Posterior vena cava (tissue), 2 donors: ENCODE measurements at regions of chr16 and their contacts with region 1.

Region 1: GRCh38 chr16:11004957-11005610 is 60.7 kb downstream of the CLEC16A start:
- DNase-seq: no peak

Region 2: DNA sequence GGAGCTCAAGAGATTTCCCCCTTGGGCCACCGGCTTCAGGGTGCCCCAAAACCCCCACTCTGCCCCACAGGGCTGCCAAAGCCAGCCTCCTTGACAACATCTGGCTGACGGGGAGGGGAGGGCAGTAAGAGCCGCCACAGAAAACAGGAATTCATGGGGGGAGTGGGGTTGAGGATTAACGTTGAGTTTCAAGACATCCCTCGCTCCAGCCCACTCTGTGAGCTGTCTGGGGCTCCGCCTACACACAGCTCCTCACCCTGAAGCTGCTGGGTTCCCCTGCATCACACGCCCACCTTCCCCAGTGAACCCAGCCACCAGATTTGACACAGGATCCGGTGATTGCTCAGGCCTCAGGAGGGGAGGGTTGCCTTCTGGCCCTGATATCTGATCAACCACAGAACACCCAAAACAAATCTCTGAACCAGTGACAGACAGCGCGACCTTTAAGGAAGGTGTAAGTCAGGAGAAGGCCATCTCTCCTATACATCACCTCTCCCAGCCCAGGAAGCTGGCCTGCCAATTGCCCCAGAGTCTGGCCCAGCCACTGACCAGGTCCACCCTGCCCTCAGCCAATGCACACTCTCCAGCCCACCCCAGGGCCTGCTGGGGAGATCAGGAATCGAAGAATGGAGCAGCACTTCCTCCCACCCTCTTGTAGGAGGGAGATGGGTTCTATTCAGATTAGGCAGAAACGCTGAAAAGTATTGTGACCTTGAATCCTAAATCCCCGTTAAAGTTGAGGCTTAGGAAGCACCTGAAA is 71.4 kb after region 1 on chr16:
- intact Hi-C with region 1: loop called in 1 of 2 experiments (anchors 10 kb)
- DNase-seq: peak; percentile 57

Region 3: DNA sequence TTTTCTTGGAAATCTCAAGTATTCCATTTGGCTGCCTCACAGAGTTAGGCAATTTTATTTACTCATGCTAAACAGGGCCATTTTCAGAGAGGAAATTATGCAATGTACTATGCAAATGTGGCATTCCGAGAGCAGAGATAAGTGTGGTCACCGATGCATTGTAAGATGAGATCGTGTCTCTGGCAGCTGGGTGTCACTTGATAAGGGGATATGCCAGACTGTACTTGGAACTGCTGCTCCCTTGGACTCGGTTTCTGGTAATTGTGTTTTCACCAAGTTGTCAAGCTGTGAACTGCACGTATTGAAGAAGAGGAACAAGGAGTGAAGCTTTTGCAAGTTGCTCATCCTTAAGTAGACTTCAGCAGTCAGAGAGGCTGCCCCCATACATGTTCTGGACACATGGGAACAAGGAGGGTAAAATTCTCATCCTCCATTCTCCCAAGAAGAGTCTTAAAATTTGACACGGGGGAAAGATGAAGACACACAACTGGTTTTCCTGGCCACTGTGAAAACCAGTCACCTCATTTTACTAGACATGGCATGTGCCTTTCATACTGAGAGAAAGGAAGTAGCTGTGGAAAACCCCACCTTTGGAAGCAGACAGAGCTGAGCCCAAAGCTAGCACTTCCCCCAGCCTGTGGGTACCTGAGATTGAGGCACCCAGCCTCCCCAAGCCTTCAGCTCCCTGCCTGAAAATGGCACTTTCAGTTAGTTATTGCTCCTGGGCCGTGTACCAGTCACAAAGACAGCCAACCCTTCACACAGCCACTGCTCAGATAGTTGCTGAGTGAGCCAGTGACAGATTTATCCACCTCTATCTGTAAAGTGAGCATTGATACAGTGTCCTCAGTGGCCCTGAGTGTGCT is 100.2 kb after region 1 on chr16:
- intact Hi-C with region 1: loop called in 1 of 2 experiments (anchors 10 kb)
- DNase-seq: no peak